ENCODE measurements at regions of chr2 and their contacts with region 1.

Region 1: DNA sequence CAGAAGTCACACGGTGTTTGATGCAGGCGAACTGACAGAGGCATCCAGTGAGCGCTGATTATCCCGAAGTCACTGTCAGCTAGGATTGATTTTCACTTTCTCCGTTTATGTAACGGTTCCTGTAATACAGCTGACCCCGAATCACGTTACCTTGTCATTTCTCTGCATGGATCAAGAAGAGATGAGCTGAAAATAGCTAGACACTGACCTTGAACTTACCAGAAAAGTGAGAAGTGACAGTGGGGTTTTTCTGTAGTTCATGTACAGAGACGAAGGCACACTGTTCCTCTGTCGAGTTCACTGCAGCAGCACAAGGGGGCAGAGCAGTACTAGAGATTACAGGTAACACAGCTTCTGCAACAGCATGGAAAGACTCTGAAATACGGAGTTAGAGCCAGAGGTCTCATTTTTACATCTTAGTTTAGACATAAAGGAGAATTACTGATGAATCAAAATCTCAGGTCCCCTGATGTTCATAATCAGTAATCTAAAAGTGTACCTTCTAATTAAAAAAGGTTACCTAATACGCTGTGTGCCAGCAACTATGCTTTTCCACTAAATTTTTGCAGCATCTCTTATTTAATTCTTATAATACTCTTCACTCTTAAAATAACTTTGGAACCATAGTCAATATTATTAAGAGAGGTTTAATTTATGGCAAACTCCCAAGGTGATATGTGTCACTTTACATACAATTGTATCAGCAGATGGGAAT is 33.1 kb downstream of the ARHGAP15 start:
- DNase-seq: peak; percentile 12
- H3K4me3 Mint-ChIP-seq: no peak overlapping the region
- H3K27ac Mint-ChIP-seq: peak overlapping the region; percentile 19
- H3K4me1 Mint-ChIP-seq: peaks cover 54% of the 10 kb centered on the region
- H3K27me3 Mint-ChIP-seq: no peaks in the 10 kb centered on the region

Region 2: DNA sequence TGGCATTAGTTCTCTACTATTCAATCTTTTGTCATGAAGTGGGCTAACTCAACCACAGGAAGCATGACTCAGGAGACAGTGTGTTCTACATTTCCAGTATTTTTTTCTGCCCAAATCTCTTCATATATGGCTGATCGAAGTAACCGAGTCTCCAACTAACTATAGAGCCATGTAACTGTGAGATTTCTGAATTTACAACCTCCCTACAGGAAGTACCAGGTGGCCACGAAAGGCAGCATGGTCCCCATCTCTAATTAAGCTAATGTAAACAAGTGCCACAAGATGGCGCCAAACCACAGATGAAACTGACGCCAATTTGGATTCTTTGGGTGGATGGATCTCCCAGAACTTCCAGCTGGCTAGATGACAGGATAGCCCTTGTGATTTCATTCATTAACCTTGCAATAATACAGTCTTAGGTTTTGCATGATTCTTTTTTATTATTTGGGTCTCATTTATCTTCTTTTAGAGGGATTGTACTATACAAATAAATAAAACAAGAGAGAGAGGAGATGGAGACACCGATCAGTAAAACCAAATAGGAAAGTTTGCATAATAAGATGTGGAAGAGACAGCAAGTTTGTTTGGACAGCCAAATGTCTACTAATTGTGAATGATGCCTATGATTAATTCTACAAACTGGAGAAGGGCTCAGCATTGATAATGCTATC is 51.4 kb before region 1 on chr2:
- intact Hi-C with region 1: loop called (anchors 1 kb)
- DNase-seq: peak; percentile 46
- H3K4me3 Mint-ChIP-seq: no peak overlapping the region
- H3K27ac Mint-ChIP-seq: peak overlapping the region; percentile 64
- H3K4me1 Mint-ChIP-seq: peaks cover 39% of the 10 kb centered on the region
- H3K27me3 Mint-ChIP-seq: peaks cover 8% of the 10 kb centered on the region

Region 3: GRCh38 chr2:143177096-143177786 is 15.0 kb after region 1 on chr2:
- intact Hi-C with region 1: loop called (anchors 2 kb)
- DNase-seq: no peak
- H3K4me3 Mint-ChIP-seq: peak overlapping the region; percentile 74
- H3K27ac Mint-ChIP-seq: peak overlapping the region; percentile 90
- H3K4me1 Mint-ChIP-seq: peaks cover 39% of the 10 kb centered on the region
- H3K27me3 Mint-ChIP-seq: no peaks in the 10 kb centered on the region

Region 4: DNA sequence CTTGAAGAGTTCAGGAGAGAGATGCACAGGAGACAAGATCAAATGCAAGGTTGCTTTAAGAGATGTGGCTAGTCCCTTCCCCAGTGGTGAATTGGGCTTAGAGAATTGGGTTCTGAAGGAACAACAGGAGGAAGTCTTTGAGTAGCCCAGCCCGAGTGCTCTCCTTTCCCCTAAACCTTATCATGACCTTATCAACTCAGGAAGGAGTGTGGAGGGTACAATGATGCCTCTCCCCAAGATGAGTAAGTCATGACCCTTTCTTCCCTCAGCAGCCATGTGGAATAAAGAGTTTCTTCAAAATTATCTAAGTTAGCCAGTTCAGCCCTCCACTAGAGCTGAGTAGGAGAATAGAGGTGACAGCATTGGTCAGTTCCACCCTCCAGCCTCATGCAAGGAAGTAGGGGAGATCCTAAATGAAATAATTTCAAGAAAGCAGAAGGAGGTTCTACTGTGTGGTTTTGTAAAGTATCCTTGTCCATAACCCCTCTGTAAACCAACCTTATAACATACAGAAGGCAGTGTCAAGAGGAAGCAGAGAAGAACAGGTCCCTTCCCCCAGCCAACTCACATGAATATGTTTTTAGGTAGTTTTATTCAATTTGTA is 55.3 kb after region 1 on chr2:
- intact Hi-C with region 1: loop called (anchors 1 kb)
- DNase-seq: no peak
- H3K4me3 Mint-ChIP-seq: no peak overlapping the region
- H3K27ac Mint-ChIP-seq: peak overlapping the region; percentile 80
- H3K4me1 Mint-ChIP-seq: peaks cover 34% of the 10 kb centered on the region
- H3K27me3 Mint-ChIP-seq: no peaks in the 10 kb centered on the region

Region 5: DNA sequence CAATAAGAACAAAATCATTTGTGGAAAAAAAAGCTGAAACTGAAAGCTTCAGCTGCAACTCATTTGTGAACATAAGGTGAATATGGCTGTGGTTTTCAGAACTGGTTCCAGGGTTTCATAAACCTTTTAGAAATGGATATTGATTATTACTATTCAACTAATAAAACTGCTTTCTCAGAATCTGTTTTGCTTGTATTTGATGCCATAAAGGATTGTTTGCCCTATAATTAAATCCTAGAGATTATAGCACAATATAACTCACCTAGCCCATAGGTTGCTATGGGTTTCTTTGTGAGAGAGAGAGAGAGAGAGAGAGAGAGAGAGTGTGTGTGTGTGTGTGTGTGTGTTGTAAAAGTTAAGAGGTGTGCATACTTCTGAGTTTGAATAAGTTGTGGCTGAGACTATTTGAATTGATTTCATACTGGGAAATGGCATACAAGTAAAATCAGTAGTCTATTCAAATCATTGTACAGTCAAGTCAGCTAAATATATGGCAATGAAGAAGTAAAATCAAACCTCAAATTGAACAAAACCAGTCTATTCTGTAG is 306.1 kb after region 1 on chr2:
- intact Hi-C with region 1: no loop called
- DNase-seq: no peak
- H3K4me3 Mint-ChIP-seq: no peak overlapping the region
- H3K27ac Mint-ChIP-seq: peak overlapping the region; percentile 24
- H3K4me1 Mint-ChIP-seq: peaks cover 30% of the 10 kb centered on the region
- H3K27me3 Mint-ChIP-seq: no peaks in the 10 kb centered on the region

Measured in activated T-helper 2 cell treated with anti-CD3 and anti-CD28 coated beads, Interferon-gamma antibody, Interleukin-2, Interleukin-4, amounts not matched to agents 10 μg/mL and 5 μg/mL and 100 μg/mL, durations not matched to agents 14 hours and 24 hours and 36 hours (primary cell).